ENCODE measurements at regions of chr14 and their contacts with region 1.

Region 1: GRCh38 chr14:51697848-51698247 is 46.1 kb downstream of the FRMD6 start:
- DNase-seq: no peak

Region 2: DNA sequence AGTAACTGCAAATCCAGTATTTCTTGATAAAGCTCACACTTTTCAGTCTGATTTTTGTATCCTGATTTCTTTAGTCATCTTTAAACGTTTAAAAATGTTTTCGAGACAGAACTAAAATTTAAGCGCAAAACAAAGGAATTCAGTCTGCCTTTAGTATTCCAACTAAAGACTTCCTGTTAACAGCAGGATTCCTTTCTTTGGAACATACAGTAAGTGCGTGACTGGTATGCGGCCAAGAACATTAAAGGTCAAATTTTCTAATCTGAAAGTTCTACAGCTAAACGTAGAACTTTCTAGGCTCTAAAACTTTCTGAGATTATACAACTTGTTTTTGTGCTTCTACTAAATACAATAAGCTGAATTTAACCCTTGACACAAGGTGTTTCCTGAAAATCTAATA is 1039.6 kb before region 1 on chr14:
- intact Hi-C with region 1: no loop called
- DNase-seq: no peak

Region 3: GRCh38 chr14:51726166-51726899 is 28.5 kb after region 1 on chr14:
- intact Hi-C with region 1: loop called in 1 of 2 experiments (anchors 1 kb)
- DNase-seq: no peak